ENCODE measurements at regions of chr10 and their contacts with region 1.

Region 1: DNA sequence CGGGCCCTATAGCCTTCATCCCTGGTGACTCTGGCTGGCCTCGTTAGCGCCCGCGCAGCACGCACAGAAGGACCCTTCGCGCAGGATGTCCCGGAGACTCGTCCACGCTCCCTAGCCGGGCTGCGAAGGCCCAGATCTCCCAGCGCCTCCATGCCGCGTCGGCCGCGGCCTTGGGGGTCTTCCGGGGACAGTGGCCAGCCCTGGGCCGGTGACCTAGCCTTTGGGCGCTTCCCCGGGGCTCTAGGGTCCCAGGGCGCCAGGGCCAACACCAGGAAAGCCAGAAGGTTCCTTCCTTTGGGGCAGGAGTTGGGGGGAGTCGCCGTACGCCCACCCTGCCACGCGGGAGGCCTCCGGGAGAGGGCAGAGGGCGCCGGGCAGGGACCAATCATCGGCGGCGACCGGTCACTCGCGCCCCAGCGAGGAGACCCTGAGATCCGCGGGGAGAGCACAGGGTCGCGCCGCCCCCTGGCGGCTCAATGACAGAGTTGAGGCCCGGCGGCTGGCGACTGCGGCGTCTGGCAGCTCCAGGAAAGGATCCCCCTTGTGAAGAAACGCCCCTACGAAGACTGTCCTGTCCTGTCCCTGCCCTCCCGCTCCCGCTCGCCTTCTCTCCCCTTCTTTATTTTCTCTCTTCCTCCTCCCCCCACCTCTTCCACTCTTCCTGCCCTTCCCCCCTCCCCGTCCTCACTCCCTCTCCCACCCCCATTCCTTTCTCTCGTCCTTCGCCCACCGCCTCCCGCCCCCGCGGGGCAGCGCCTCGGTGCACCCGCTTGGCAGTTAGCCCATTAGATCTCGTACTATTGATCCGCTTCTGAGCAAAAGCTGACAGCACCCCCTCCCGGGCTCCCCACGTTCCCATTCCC is 62.3 kb upstream of the LBX1 start:
- DNase-seq: peak; percentile 34
- ATAC-seq: peak; percentile 71
- H3K4me3 Mint-ChIP-seq: peak overlapping the region; percentile 79
- H3K27ac Mint-ChIP-seq: no peak overlapping the region
- H3K4me1 Mint-ChIP-seq: peaks cover 13% of the 10 kb centered on the region
- H3K27me3 Mint-ChIP-seq: peaks cover 64% of the 10 kb centered on the region
- CTCF ChIP-seq: no peak

Region 2: DNA sequence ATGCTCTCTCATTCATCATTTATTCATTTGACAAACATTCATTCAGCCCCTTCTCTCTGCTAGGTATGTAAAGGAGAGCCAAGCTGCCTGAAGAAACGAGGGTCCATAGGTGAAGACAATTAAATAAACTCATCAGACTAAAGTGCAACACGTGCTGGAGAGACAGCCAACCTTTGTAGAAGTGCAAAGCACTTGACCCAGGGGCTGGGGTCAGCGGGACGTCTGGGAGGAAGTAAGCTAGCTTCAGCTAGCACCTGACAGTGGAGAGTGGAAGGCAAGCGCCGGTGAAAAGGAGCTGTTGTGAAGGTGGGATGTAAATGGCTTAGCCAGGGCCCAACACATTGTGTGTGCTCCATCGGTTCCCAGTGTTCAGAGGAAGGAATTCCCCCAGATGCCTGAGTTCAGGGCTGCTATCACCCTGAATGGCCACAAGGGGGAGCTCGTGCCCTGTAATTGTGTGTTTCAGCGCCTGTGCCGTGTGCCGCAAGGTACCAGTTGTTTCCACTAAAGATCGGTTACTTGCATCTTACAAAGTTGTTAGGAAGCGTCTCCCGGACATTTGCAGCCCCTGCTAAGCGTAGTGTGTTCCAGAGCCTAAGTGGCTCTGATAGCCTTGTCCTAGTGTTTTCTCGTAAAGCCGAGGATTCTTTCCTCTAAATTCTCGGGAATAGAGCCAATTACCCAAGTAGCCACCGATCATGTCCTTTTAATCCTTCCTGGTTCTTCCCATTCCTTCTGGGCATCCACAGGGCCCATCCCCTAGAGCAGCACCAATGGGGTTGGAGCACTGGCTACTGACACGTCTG is 129.9 kb before region 1 on chr10:
- CTCF ChIA-PET with region 1: no interaction called
- POLR2A ChIA-PET with region 1: no interaction called
- intact Hi-C with region 1: loop called (anchors 5 kb)
- DNase-seq: peak; percentile 47
- ATAC-seq: peak; percentile 94
- H3K4me3 Mint-ChIP-seq: no peak overlapping the region
- H3K27ac Mint-ChIP-seq: no peak overlapping the region
- H3K4me1 Mint-ChIP-seq: peaks cover 15% of the 10 kb centered on the region
- H3K27me3 Mint-ChIP-seq: peaks cover 59% of the 10 kb centered on the region
- CTCF ChIP-seq: peak; percentile 32

Region 3: GRCh38 chr10:101214446-101215396 is 76.8 kb before region 1 on chr10:
- CTCF ChIA-PET with region 1: interaction called, 25 read pairs
- POLR2A ChIA-PET with region 1: no interaction called
- intact Hi-C with region 1: loop called (anchors 1 kb)
- DNase-seq: peak; percentile 72
- ATAC-seq: peak; percentile 75
- H3K4me3 Mint-ChIP-seq: peak overlapping the region; percentile 60
- H3K27ac Mint-ChIP-seq: peak overlapping the region; percentile 68
- H3K4me1 Mint-ChIP-seq: peaks cover 32% of the 10 kb centered on the region
- H3K27me3 Mint-ChIP-seq: peaks cover 56% of the 10 kb centered on the region
- CTCF ChIP-seq: peak; percentile 73

Region 4: GRCh38 chr10:101228153-101228973 is 63.2 kb before region 1 on chr10:
- CTCF ChIA-PET with region 1: no interaction called
- POLR2A ChIA-PET with region 1: no interaction called
- intact Hi-C with region 1: no loop called
- DNase-seq: no peak
- ATAC-seq: no peak
- H3K4me3 Mint-ChIP-seq: peak overlapping the region; percentile 48
- H3K27ac Mint-ChIP-seq: no peak overlapping the region
- H3K4me1 Mint-ChIP-seq: peaks cover 41% of the 10 kb centered on the region
- H3K27me3 Mint-ChIP-seq: peaks cover 63% of the 10 kb centered on the region
- CTCF ChIP-seq: no peak

Region 5: GRCh38 chr10:101272229-101272868 is 19.2 kb before region 1 on chr10:
- CTCF ChIA-PET with region 1: interaction called, 6 read pairs
- POLR2A ChIA-PET with region 1: no interaction called
- intact Hi-C with region 1: loop called (anchors 1 kb)
- DNase-seq: peak; percentile 41
- ATAC-seq: peak; percentile 67
- H3K4me3 Mint-ChIP-seq: no peak overlapping the region
- H3K27ac Mint-ChIP-seq: no peak overlapping the region
- H3K4me1 Mint-ChIP-seq: no peaks in the 10 kb centered on the region
- H3K27me3 Mint-ChIP-seq: peaks cover 40% of the 10 kb centered on the region
- CTCF ChIP-seq: no peak

Region 6: GRCh38 chr10:101330631-101331225 is 39.2 kb after region 1 on chr10:
- CTCF ChIA-PET with region 1: no interaction called
- POLR2A ChIA-PET with region 1: no interaction called
- intact Hi-C with region 1: no loop called
- DNase-seq: no peak
- ATAC-seq: no peak
- H3K4me3 Mint-ChIP-seq: no peak overlapping the region
- H3K27ac Mint-ChIP-seq: no peak overlapping the region
- H3K4me1 Mint-ChIP-seq: peaks cover 3% of the 10 kb centered on the region
- H3K27me3 Mint-ChIP-seq: peaks cover 22% of the 10 kb centered on the region
- CTCF ChIP-seq: no peak

Region 7: GRCh38 chr10:101536800-101537199 is 245.2 kb after region 1 on chr10:
- CTCF ChIA-PET with region 1: no interaction called
- POLR2A ChIA-PET with region 1: interaction called, 11 read pairs
- intact Hi-C with region 1: no loop called
- DNase-seq: no peak
- ATAC-seq: no peak
- H3K4me3 Mint-ChIP-seq: no peak overlapping the region
- H3K27ac Mint-ChIP-seq: no peak overlapping the region
- H3K4me1 Mint-ChIP-seq: no peaks in the 10 kb centered on the region
- H3K27me3 Mint-ChIP-seq: no peaks in the 10 kb centered on the region
- CTCF ChIP-seq: no peak